Natural killer cell (primary cell): ENCODE measurements at regions of chr17 and their contacts with region 1.

Region 1: DNA sequence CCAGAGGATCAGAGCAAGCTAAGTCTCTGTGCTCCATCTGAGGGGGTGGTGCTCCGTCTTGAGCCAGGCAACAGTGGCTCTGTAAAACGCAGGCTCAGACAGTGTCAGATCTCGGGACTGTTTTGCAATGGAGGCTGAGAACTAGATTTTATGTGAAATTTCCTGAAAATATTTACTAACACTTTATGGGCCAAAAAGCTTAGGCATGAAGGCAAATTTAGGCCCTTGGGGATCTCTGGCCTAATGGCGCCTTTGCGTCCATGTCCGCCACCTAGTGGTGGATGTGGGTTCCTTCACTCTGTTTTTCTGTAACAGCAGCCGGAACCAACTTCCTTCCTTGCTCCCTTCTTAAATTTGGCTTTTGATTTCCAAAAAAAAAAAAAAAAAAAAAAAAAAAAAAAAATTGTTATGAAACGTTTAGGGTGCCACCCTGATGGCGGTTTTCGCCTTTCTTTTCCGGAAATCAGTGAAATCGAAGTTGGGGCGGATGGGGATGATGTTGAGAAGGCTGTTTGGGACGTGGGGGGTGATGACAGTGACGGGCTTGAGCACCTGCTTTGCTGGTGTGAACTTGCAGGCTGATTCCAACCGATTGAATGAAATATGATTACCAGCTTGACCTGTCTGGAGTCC is 14.0 kb upstream of the ELAC2 start:
- DNase-seq: peak in 1 of 2 donors; percentile 79
- ATAC-seq: peak in 2 of 3 donors; percentile 80 to 81
- H3K4me3 ChIP-seq: no peak overlapping the region
- H3K4me3 Mint-ChIP-seq: no peak overlapping the region
- H3K27ac ChIP-seq: no peak overlapping the region
- H3K27ac Mint-ChIP-seq: no peak overlapping the region
- H3K4me1 ChIP-seq: peaks cover 3% of the 10 kb centered on the region
- H3K4me1 Mint-ChIP-seq: peaks cover 0 to 11% of the 10 kb centered on the region in 2 donors
- H3K27me3 ChIP-seq: no peaks in the 10 kb centered on the region
- H3K27me3 Mint-ChIP-seq: peaks cover 7 to 13% of the 10 kb centered on the region in 2 donors
- CTCF ChIP-seq: peak; percentile 89

Region 2: GRCh38 chr17:12180644-12181261 is 851.1 kb before region 1 on chr17:
- intact Hi-C with region 1: loop called (anchors 5 kb)
- DNase-seq: peak in 1 of 2 donors; percentile 43
- ATAC-seq: no peak
- H3K4me3 ChIP-seq: no peak overlapping the region
- H3K4me3 Mint-ChIP-seq: no peak overlapping the region
- H3K27ac ChIP-seq: no peak overlapping the region
- H3K27ac Mint-ChIP-seq: no peak overlapping the region
- H3K4me1 ChIP-seq: no peaks in the 10 kb centered on the region
- H3K4me1 Mint-ChIP-seq: no peaks in the 10 kb centered on the region
- H3K27me3 ChIP-seq: no peaks in the 10 kb centered on the region
- H3K27me3 Mint-ChIP-seq: no peaks in the 10 kb centered on the region
- CTCF ChIP-seq: peak; percentile 43

Region 3: DNA sequence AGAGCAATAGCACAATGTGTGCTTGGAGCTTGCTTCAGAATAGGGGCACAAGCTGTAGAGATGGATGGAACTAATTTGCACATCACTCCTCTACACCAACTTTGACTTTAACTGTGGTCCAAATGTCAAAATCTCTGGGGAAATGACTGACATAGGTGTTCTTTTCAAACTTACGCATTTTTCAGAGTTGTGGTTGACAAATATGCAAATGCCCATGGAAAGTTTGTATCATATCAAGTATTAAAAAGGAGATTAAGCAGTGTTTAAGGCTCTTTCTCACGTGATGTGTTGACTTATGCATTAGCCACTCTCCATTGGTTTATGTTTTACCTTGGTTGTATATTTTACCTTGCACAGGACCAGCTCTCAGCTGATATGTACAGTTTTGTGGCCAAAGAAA is 91.1 kb before region 1 on chr17:
- intact Hi-C with region 1: no loop called
- DNase-seq: no peak
- ATAC-seq: no peak
- H3K4me3 ChIP-seq: no peak overlapping the region
- H3K4me3 Mint-ChIP-seq: no peak overlapping the region
- H3K27ac ChIP-seq: no peak overlapping the region
- H3K27ac Mint-ChIP-seq: no peak overlapping the region
- H3K4me1 ChIP-seq: no peaks in the 10 kb centered on the region
- H3K4me1 Mint-ChIP-seq: no peaks in the 10 kb centered on the region
- H3K27me3 ChIP-seq: no peaks in the 10 kb centered on the region
- H3K27me3 Mint-ChIP-seq: peaks cover 0 to 11% of the 10 kb centered on the region in 2 donors
- CTCF ChIP-seq: no peak